ENCODE measurements at regions of chr20 and their contacts with region 1.

Region 1: DNA sequence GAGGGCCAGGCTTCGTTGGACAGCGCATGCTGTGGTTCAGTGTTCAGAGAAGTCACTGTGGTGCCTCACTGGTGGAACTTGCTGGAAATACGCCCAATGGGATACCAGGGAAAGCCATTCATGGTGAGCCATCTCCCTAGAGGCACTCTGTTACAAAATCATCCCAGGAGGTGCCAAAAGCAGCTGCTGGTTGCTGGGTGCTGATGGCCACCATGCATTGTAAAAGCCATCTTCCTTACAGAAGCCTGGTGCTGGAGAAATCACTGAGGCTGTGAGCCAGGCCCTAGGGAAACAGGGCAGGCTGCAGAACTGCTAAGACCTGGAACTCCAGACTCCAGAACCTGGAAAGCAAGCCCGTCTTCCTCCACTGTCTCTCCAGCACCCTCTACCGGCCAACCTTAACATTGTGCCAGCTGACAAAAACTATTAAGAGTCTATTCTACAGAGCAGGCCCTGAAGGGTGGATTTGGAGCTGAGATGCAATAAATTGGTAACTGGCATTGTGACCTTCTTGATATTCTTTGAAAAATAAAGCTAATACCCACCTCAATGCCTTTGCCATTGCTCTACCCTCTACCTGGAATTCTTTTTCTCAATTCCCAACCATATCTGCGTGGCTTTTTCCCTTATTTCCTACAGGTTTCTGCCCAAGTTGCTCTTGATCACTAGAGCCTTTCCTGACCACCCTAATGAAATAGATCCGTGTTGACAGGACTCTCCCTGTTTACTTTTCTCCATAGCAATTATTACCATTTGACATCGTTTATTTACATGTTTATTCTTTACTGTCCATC is 18.5 kb downstream of the SNRPB start:
- DNase-seq: peak; percentile 78 to 86
- H3K4me3 ChIP-seq: no peak overlapping the region
- H3K27ac ChIP-seq: no peak overlapping the region
- H3K4me1 ChIP-seq: peaks cover 0 to 6% (median 3%) of the 10 kb centered on the region in 4 donors
- H3K27me3 ChIP-seq: no peaks in the 10 kb centered on the region
- CTCF ChIP-seq: peak in 5 of 7 experiments; percentile 40 to 83 (median 68)
- EP300 ChIP-seq: no peak
- POLR2A ChIP-seq: no peak

Region 2: DNA sequence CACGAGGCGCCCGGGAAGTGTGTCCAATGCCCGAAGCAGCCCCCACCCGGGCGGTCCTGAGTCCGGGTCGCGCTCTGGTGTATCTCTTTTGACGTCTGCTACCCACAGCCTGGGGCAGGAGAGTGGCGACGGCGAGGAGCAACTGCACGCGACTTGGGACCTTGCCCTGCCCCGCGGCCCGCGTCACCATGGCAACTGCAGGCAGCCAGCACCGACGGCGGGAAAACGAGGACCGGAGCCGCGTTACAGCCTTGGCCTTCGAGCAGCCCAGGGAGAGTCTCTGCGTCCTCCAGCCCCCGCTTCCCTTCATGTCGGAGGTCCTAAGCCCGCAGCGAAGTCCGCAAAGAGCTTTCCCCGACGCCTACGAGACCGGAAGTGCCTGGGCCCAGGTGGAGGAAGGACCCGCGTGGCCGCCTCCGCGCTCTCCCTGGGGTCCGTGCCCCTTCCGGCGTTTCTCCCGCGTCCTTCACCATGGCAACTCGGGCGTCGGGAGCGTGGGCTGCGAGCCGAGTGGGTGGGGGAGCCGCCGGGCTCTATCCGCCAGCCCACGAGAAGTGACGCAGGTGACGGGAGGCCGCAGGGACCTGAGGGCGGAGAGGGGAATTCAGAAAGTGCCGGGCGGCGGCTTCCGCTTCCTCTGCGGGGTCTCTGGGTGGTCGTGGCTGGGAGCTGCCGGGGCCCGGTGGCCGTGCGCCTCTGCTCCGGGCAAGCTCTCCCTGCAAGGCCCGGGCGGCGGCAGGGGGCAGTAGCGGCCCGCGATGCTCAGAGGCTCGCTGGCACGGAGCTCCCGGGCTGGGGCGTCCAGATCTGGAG is 245.0 kb before region 1 on chr20:
- intact Hi-C with region 1: loop called (anchors 10 kb)
- DNase-seq: peak; percentile 84 to 92
- H3K4me3 ChIP-seq: peak overlapping the region; percentile 51 to 73 (median 62)
- H3K27ac ChIP-seq: peak overlapping the region in 1 of 5 donors; percentile 35
- H3K4me1 ChIP-seq: peaks cover 9 to 14% (median 13%) of the 10 kb centered on the region in 4 donors
- H3K27me3 ChIP-seq: peaks cover 0 to 36% (median 18%) of the 10 kb centered on the region in 3 donors
- CTCF ChIP-seq: peak in 5 of 7 experiments; percentile 44 to 70 (median 59)
- EP300 ChIP-seq: no peak
- POLR2A ChIP-seq: no peak

Measured in stomach (tissue), 19 donors.